Tibial artery (tissue), 4 donors: ENCODE measurements at regions of chr15 and their contacts with region 1.

Region 1: GRCh38 chr15:75801859-75802593 is 41.2 kb upstream of the UBE2Q2 start:
- DNase-seq: peak; percentile 64 to 84
- H3K4me3 ChIP-seq: peak overlapping the region in 1 of 2 donors; percentile 10
- H3K27ac ChIP-seq: no peak overlapping the region
- H3K4me1 ChIP-seq: peaks cover 0 to 4% (median 2%) of the 10 kb centered on the region in 4 donors
- H3K27me3 ChIP-seq: peaks cover 0 to 12% of the 10 kb centered on the region in 2 donors
- CTCF ChIP-seq: peak; percentile 84 to 98

Region 2: DNA sequence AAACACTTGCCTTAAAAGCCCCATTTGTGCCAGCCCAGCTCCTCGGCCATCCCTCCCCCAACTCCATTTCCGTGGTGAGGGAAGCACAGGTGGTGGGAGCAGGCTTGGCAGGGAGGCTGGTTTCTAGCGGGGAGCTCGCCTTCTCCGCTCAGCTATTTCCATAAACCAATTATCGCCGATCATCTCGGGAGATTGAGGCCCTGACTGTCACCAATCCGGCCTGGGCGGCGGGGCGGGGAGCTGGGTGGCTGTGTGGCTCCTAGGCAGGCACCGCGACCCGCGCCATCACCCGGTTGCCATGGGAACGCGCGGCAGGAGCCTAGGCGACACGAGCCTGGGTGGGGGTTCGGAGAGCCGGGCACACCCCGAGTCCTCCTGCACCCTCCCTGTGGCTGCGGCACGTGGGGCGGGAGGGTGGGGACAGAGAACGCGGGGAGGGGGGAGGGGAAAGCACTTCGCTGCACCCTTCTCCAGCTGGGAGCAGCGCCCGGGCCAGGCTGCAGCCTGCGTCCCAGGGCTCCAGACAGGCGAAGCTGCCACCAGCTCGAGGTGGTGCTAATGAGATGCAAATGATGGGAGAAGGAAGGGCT is 1556.6 kb before region 1 on chr15:
- intact Hi-C with region 1: no loop called
- DNase-seq: no peak
- H3K4me3 ChIP-seq: peak overlapping the region in 1 of 2 donors; percentile 9
- H3K27ac ChIP-seq: no peak overlapping the region
- H3K4me1 ChIP-seq: peaks cover 0 to 44% (median 29%) of the 10 kb centered on the region in 4 donors
- H3K27me3 ChIP-seq: peaks cover 0 to 13% of the 10 kb centered on the region in 2 donors
- CTCF ChIP-seq: no peak

Region 3: GRCh38 chr15:75367913-75368688 is 433.9 kb before region 1 on chr15 and contains the start of gene MAN2C1:
- intact Hi-C with region 1: loop called (anchors 10 kb)
- DNase-seq: peak; percentile 94 to 97
- H3K4me3 ChIP-seq: peak within 1 kb of the TSS; percentile 85 to 92
- H3K27ac ChIP-seq: peak within 1 kb of the TSS; percentile 97 to 98
- H3K4me1 ChIP-seq: peaks cover 0 to 19% (median 12%) of the 10 kb centered on the region in 4 donors
- H3K27me3 ChIP-seq: no peaks in the 10 kb centered on the region
- CTCF ChIP-seq: peak; percentile 62 to 64

Region 4: GRCh38 chr15:75523011-75523410 is 279.0 kb before region 1 on chr15:
- intact Hi-C with region 1: loop called (anchors 10 kb)
- DNase-seq: no peak
- H3K4me3 ChIP-seq: no peak overlapping the region
- H3K27ac ChIP-seq: no peak overlapping the region
- H3K4me1 ChIP-seq: peaks cover 0 to 3% (median 0%) of the 10 kb centered on the region in 4 donors
- H3K27me3 ChIP-seq: no peaks in the 10 kb centered on the region
- CTCF ChIP-seq: no peak

Region 5: GRCh38 chr15:75639709-75640482 is 162.1 kb before region 1 on chr15 and contains the start of gene IMP3:
- intact Hi-C with region 1: loop called (anchors 10 kb)
- DNase-seq: peak; percentile 96 to 98
- H3K4me3 ChIP-seq: peak within 1 kb of the TSS; percentile 81 to 94
- H3K27ac ChIP-seq: peak within 1 kb of the TSS; percentile 90 to 96
- H3K4me1 ChIP-seq: peaks cover 0 to 41% (median 27%) of the 10 kb centered on the region in 4 donors
- H3K27me3 ChIP-seq: no peaks in the 10 kb centered on the region
- CTCF ChIP-seq: no peak

Region 6: GRCh38 chr15:75732809-75733451 is 69.1 kb before region 1 on chr15:
- intact Hi-C with region 1: loop called (anchors 5 kb)
- DNase-seq: peak; percentile 66 to 85
- H3K4me3 ChIP-seq: no peak overlapping the region
- H3K27ac ChIP-seq: peak overlapping the region in 1 of 2 donors; percentile 4
- H3K4me1 ChIP-seq: peaks cover 6 to 18% (median 15%) of the 10 kb centered on the region in 4 donors
- H3K27me3 ChIP-seq: no peaks in the 10 kb centered on the region
- CTCF ChIP-seq: peak; percentile 95